Prostate gland (tissue), 2 donors: ENCODE measurements at regions of chr1 and their contacts with region 1.

Region 1: DNA sequence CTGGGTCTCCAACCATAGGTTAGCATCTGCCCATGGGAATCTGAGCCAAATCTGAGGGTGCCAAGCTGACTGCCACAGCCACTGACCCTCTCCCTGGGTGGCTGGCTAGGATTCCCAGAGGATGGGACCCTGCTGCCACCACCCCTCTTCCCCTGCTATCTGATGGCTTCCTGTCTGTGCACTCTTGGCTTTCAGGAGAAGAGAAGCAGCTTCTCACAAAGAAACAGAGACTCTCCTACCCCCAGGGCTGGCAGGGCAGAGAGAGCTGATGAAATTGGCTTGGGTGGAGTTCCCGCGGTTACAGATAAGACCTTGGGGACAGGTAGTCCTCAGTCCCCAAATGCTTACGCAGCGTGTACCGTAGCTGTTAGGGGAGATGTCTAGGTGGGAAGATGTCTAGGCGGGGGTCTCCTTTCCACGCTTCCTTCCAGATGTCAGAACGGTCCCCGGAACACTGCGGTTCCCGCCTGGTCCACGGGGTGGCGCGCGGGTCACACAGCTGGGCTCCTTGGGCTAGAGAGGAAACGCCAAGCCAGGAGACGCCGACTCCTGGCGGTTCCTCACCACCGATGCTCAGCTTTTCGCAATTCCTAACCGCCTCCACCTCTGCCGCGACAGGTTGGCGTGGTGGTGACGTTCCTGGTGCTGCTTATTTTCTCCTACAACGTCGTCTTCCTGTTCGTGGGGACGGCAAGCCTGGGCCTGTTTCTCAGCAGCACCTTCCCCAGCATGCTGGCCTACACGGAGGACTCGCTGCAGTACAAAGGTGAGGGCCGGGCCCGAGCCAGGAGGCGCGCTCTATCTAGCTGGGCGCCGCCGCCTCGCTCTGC is 40.1 kb downstream of the ELK4 start:
- DNase-seq: peak; percentile 92
- H3K4me3 ChIP-seq: peak overlapping the region; percentile 10 to 15
- H3K27ac ChIP-seq: peak overlapping the region; percentile 50 to 63
- H3K4me1 ChIP-seq: no peaks in the 10 kb centered on the region
- H3K27me3 ChIP-seq: no peaks in the 10 kb centered on the region
- CTCF ChIP-seq: peak; percentile 89 to 100 (median 98)
- POLR2A ChIP-seq: peak; percentile 46

Region 2: GRCh38 chr1:205631727-205632373 is 40.1 kb after region 1 on chr1 and contains the start of gene ELK4:
- intact Hi-C with region 1: loop called (anchors 2 kb)
- DNase-seq: peak; percentile 97
- H3K4me3 ChIP-seq: peak within 1 kb of the TSS; percentile 60
- H3K27ac ChIP-seq: peak within 1 kb of the TSS; percentile 89 to 94
- H3K4me1 ChIP-seq: peaks cover 2% of the 10 kb centered on the region
- H3K27me3 ChIP-seq: no peaks in the 10 kb centered on the region
- CTCF ChIP-seq: peak; percentile 56 to 94 (median 78)
- POLR2A ChIP-seq: peak; percentile 96
- total RNA-seq, gene ELK4: 58.8 to 62.7 TPM

Region 3: DNA sequence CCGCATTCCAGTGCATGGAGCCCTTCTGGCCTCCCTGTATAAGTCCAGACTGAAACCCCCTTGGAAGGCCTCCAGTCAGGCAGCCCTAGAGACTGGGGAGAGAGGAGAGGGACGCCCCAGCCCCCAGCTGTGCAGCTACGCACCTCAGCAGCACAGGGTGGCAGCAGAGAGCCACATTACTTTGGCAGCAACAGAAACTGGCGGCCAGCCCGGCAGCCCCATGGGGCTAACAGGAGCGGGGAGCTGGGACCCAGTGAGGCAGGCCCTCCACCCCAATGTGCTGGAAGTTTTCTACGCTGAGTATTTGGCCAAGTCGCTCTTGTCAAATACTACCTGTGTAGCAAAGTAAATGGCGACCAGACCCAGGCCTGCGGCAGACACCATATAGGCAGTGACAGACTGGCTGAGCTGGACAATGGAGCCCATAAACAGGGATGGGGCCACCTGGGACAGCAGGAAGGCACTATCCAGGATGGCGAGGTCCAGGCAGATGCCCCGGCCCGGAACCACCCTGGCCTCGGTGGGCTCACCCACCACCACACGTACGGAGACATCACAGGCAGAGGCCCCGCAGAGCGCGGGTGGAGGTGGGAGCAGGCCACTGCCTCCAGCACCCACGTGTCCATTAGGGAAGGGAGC is 67.3 kb after region 1 on chr1:
- intact Hi-C with region 1: loop called (anchors 1 kb)
- DNase-seq: peak; percentile 75
- H3K4me3 ChIP-seq: no peak overlapping the region
- H3K27ac ChIP-seq: peak overlapping the region in 1 of 2 donors; percentile 89
- H3K4me1 ChIP-seq: peaks cover 12% of the 10 kb centered on the region
- H3K27me3 ChIP-seq: no peaks in the 10 kb centered on the region
- CTCF ChIP-seq: peak; percentile 63 to 92 (median 76)
- POLR2A ChIP-seq: no peak